ENCODE measurements at regions of chr9 and their contacts with region 1.

Region 1: GRCh38 chr9:133144137-133144903 is 19.4 kb downstream of the GBGT1 start:
- DNase-seq: peak; percentile 74 to 83 (median 77)
- ATAC-seq: peak; percentile 74
- H3K4me3 ChIP-seq: peak overlapping the region; percentile 41
- H3K27ac ChIP-seq: peak overlapping the region; percentile 72
- H3K4me1 ChIP-seq: peaks cover 55 to 80% of the 10 kb centered on the region in 2 experiments
- H3K27me3 ChIP-seq: no peaks in the 10 kb centered on the region
- CTCF ChIP-seq: peak; percentile 88 to 98 (median 96)
- EP300 ChIP-seq: no peak
- POLR2A ChIP-seq: no peak; the same call in 1 of the 2 replicates
- RAD21 ChIP-seq: peak; percentile 90 to 97

Region 2: GRCh38 chr9:132443951-132444607 is 700.2 kb before region 1 on chr9:
- CTCF ChIA-PET with region 1: no interaction called
- POLR2A ChIA-PET with region 1: no interaction called
- in situ Hi-C with region 1: no loop called
- intact Hi-C with region 1: no loop called
- DNase-seq: no peak
- ATAC-seq: no peak
- H3K4me3 ChIP-seq: no peak overlapping the region
- H3K27ac ChIP-seq: no peak overlapping the region
- H3K4me1 ChIP-seq: peaks cover 0 to 3% of the 10 kb centered on the region in 2 experiments; a peak in 1 of 5 replicates
- H3K27me3 ChIP-seq: peaks cover 57 to 77% of the 10 kb centered on the region in 2 experiments
- CTCF ChIP-seq: no peak
- EP300 ChIP-seq: no peak
- POLR2A ChIP-seq: no peak
- RAD21 ChIP-seq: no peak

Region 3: GRCh38 chr9:133103183-133103986 is 40.9 kb before region 1 on chr9:
- CTCF ChIA-PET with region 1: interaction called, 26 read pairs
- POLR2A ChIA-PET with region 1: interaction called, 5 read pairs
- in situ Hi-C with region 1: loop called (anchors 5 kb)
- intact Hi-C with region 1: loop called (anchors 1 kb)
- DNase-seq: peak; percentile 66 to 79 (median 72)
- ATAC-seq: peak; percentile 91
- H3K4me3 ChIP-seq: no peak overlapping the region
- H3K27ac ChIP-seq: no peak overlapping the region
- H3K4me1 ChIP-seq: peaks cover 0 to 12% of the 10 kb centered on the region in 2 experiments; a peak in 2 of 5 replicates
- H3K27me3 ChIP-seq: no peaks in the 10 kb centered on the region
- CTCF ChIP-seq: peak; percentile 87 to 95 (median 90)
- EP300 ChIP-seq: no peak
- POLR2A ChIP-seq: no peak
- RAD21 ChIP-seq: peak; percentile 92 to 98

Region 4: GRCh38 chr9:133133681-133134418 is 10.5 kb before region 1 on chr9:
- CTCF ChIA-PET with region 1: interaction called, 3 read pairs
- POLR2A ChIA-PET with region 1: interaction called, 10 read pairs
- in situ Hi-C with region 1: no loop called
- intact Hi-C with region 1: no loop called
- DNase-seq: peak; percentile 74 to 91 (median 83)
- ATAC-seq: peak; percentile 92
- H3K4me3 ChIP-seq: no peak overlapping the region
- H3K27ac ChIP-seq: peak overlapping the region; percentile 80
- H3K4me1 ChIP-seq: peaks cover 56 to 68% of the 10 kb centered on the region in 2 experiments
- H3K27me3 ChIP-seq: no peaks in the 10 kb centered on the region
- CTCF ChIP-seq: no peak
- EP300 ChIP-seq: peak; percentile 85
- POLR2A ChIP-seq: no peak
- RAD21 ChIP-seq: peak in 1 of 2 experiments; percentile 34; a peak in 2 of 4 replicates

Region 5: DNA sequence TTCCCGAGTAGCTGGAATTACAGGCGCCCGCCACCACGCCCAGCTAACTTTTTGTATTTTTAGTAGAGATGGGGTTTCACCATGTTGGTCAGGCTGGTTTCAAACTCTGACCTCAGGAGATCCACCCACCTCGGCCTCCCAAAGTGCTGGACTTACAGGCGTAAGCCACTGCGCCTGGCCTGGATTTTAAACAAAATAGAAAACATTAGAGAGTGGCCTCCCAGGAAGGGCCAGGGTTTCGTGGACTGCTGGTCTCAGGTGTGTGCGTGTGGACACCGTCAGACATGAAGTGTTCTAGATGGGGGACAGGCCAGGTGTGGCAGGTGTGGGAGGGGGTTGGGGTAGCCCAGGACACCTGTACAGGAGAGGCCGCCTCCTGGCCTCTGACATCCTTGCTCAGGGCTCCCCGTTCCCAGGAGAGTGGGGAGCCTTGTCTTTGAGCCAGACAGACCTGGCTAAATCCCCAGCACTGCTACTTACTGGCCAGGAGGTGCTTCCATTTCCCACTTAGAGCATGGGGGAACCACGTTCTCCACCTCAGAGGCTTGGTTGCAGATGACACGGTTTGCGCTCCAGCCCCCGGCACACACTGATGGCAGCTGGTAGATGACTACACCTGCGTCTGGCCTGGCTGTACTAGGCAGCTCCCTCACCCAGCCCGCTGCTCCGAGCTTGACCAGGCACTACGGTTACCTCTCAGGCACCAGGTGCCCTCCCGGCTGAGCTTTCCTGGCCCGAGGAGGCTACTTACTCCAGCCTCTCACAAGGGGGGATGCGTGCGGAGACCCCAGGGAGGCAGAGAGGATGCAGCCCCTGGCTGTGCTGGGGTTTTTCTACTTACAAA is 26.6 kb after region 1 on chr9:
- CTCF ChIA-PET with region 1: no interaction called
- POLR2A ChIA-PET with region 1: no interaction called
- in situ Hi-C with region 1: no loop called
- intact Hi-C with region 1: no loop called
- DNase-seq: no peak
- ATAC-seq: no peak; the same call in 2 of the 3 replicates
- H3K4me3 ChIP-seq: no peak overlapping the region
- H3K27ac ChIP-seq: no peak overlapping the region
- H3K4me1 ChIP-seq: peaks cover 0 to 14% of the 10 kb centered on the region in 2 experiments; a peak in 2 of 5 replicates
- H3K27me3 ChIP-seq: peaks cover 3 to 22% of the 10 kb centered on the region in 2 experiments; a peak in 2 of 5 replicates
- CTCF ChIP-seq: no peak
- EP300 ChIP-seq: no peak
- POLR2A ChIP-seq: no peak
- RAD21 ChIP-seq: no peak